IMR-90 (cell line): ENCODE measurements at regions of chr11 and their contacts with region 1.

Region 1: DNA sequence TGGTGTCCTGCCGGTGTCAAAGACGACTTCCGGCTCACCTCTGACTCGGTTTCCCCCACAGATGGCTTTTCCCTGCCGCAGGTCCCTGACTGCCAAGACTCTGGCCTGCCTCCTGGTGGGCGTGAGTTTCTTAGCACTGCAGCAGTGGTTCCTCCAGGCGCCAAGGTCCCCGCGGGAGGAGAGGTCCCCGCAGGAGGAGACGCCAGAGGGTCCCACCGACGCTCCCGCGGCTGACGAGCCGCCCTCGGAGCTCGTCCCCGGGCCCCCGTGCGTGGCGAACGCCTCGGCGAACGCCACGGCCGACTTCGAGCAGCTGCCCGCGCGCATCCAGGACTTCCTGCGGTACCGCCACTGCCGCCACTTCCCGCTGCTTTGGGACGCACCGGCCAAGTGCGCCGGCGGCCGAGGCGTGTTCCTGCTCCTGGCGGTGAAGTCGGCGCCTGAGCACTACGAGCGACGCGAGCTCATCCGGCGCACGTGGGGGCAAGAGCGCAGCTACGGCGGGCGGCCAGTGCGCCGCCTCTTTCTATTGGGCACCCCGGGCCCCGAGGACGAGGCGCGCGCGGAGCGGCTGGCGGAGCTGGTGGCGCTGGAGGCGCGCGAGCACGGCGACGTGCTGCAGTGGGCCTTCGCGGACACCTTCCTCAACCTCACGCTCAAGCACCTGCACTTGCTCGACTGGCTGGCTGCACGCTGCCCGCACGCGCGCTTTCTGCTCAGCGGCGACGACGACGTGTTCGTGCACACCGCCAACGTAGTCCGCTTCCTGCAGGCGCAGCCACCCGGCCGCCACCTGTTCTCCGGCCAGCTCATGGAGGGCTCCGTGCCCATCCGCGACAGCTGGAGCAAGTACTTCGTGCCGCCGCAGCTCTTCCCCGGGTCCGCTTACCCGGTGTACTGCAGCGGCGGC is 5.5 kb downstream of the B3GNT6 start:
- DNase-seq: peak; percentile 33
- ATAC-seq: peak; percentile 66
- H3K4me3 ChIP-seq: peak overlapping the region; percentile 35
- H3K27ac ChIP-seq: no peak overlapping the region
- H3K4me1 ChIP-seq: peaks cover 3% of the 10 kb centered on the region; the same call in 1 of the 2 replicates
- H3K27me3 ChIP-seq: peaks cover 29% of the 10 kb centered on the region
- CTCF ChIP-seq: peak; percentile 50
- POLR2A ChIP-seq: no peak
- RAD21 ChIP-seq: peak; percentile 44

Region 2: DNA sequence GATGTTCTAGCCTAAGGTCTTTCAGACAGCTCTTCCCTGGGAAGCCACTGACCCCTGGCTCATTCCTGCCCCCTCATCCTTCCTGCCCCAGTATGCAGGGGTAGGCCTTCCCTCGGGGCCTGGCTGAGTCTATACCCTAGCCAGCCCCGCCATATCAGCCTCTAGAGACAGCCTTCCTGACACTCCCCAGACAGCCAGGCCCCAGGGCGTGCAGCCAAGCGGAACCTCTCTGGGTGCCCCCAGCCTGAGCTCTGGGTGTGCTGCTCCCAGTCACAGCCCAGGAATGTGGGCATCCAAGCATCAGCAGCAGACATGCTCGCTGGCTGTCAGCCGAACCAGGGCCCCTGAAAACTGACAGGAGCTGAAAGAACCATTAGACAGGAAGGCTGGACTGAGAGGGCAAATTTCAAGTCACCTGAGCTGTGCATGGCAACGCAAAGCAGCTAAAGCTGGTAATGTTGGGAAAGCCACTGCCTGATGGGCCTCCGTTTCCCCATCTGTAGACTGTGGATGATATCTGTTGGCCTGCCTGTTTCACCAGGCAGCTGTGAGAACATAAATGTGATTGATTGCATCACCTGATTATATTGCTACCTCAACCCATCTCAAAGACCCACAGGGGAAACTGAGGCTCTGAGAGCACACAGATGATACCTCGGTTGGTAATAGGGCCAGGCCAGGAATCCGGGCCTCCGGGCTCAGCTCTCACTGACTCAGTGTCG is 462.4 kb before region 1 on chr11:
- CTCF ChIA-PET with region 1: no interaction called
- POLR2A ChIA-PET with region 1: no interaction called
- dilution Hi-C with region 1: no loop called
- in situ Hi-C with region 1: no loop called
- intact Hi-C with region 1: no loop called
- DNase-seq: peak; percentile 77
- ATAC-seq: peak; percentile 86
- H3K4me3 ChIP-seq: no peak overlapping the region
- H3K27ac ChIP-seq: 0 out of 2 replicates have a peak overlapping the region, but pooled peaks have one; percentile 5
- H3K4me1 ChIP-seq: peaks cover 22% of the 10 kb centered on the region
- H3K27me3 ChIP-seq: no peaks in the 10 kb centered on the region
- CTCF ChIP-seq: no peak
- POLR2A ChIP-seq: no peak
- RAD21 ChIP-seq: no peak

Region 3: GRCh38 chr11:76978818-76979217 is 60.9 kb before region 1 on chr11:
- CTCF ChIA-PET with region 1: no interaction called
- POLR2A ChIA-PET with region 1: no interaction called
- dilution Hi-C with region 1: no loop called
- in situ Hi-C with region 1: no loop called
- intact Hi-C with region 1: loop called (anchors 10 kb)
- DNase-seq: no peak
- ATAC-seq: no peak
- H3K4me3 ChIP-seq: no peak overlapping the region
- H3K27ac ChIP-seq: no peak overlapping the region
- H3K4me1 ChIP-seq: no peaks in the 10 kb centered on the region
- H3K27me3 ChIP-seq: no peaks in the 10 kb centered on the region
- CTCF ChIP-seq: no peak
- POLR2A ChIP-seq: no peak
- RAD21 ChIP-seq: no peak

Region 4: GRCh38 chr11:76995081-76995576 is 44.6 kb before region 1 on chr11:
- CTCF ChIA-PET with region 1: no interaction called
- POLR2A ChIA-PET with region 1: no interaction called
- dilution Hi-C with region 1: no loop called
- in situ Hi-C with region 1: no loop called
- intact Hi-C with region 1: no loop called
- DNase-seq: no peak
- ATAC-seq: no peak
- H3K4me3 ChIP-seq: no peak overlapping the region
- H3K27ac ChIP-seq: no peak overlapping the region
- H3K4me1 ChIP-seq: no peaks in the 10 kb centered on the region
- H3K27me3 ChIP-seq: no peaks in the 10 kb centered on the region
- CTCF ChIP-seq: no peak
- POLR2A ChIP-seq: no peak
- RAD21 ChIP-seq: no peak

Region 5: DNA sequence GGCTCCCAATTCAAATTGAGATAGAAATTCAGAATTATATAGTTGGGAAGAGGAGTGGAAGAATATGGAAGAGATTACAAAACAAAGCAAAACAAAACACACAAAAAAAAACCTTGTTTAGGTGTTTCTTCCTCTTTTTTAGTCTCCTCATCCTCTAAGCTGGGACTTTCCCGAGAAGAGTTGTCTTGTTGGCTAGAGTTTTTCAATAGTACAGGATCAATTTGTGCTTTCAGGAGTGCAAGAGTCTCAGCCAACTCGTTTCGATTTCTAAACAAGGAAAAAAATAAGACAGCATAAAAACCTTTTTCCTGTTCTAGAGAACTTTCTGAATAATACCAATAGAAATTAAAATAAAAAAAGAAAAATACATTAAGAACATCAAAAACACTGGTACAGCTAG is 685.7 kb after region 1 on chr11:
- CTCF ChIA-PET with region 1: no interaction called
- POLR2A ChIA-PET with region 1: no interaction called
- dilution Hi-C with region 1: no loop called
- in situ Hi-C with region 1: no loop called
- intact Hi-C with region 1: no loop called
- DNase-seq: no peak
- ATAC-seq: no peak
- H3K4me3 ChIP-seq: no peak overlapping the region
- H3K27ac ChIP-seq: no peak overlapping the region
- H3K4me1 ChIP-seq: no peaks in the 10 kb centered on the region
- H3K27me3 ChIP-seq: no peaks in the 10 kb centered on the region
- CTCF ChIP-seq: no peak
- POLR2A ChIP-seq: no peak
- RAD21 ChIP-seq: no peak